CD8-positive, alpha-beta T cell (primary cell): ENCODE measurements at regions of chr1 and their contacts with region 1.

Region 1: GRCh38 chr1:165914136-165914798 is 86.9 kb downstream of the UCK2 start:
- DNase-seq: peak; percentile 42 to 83 (median 64)
- ATAC-seq: peak; percentile 96
- H3K4me3 ChIP-seq: no peak overlapping the region
- H3K4me3 Mint-ChIP-seq: no peak overlapping the region
- H3K27ac ChIP-seq: no peak overlapping the region
- H3K27ac Mint-ChIP-seq: no peak overlapping the region
- H3K4me1 ChIP-seq: no peaks in the 10 kb centered on the region
- H3K4me1 Mint-ChIP-seq: peaks cover 2% of the 10 kb centered on the region
- H3K27me3 ChIP-seq: no peaks in the 10 kb centered on the region
- H3K27me3 Mint-ChIP-seq: no peaks in the 10 kb centered on the region
- CTCF ChIP-seq: peak; percentile 96

Region 2: DNA sequence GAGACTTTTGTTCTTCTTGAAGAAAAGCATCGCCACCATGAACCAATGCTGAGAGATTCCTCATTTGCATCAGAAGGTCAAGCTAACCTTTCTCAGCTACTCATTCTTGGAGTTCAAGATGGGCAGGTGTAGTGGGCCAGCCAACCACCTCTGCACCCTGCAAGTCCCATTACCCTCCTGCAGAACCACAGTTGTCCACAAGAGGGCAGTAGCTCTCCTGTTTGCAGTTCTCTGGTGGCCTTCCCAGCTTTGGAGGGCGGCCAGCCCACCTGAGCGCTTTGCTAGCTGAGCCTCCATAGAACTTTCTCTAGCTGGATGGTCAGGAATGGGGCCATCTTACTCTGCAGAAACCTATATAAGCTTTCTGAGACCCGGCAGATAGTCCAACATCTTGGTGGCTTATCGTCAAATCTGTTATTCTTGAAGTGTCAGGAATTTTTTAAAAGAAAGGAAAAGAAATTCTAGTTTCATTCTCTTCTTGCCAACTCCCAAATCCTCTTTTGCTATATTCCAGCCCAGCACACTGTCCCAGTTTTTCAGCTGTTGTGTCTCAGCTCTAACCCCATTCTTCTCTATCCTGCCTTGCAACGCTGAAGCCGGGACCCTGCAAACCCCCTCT is 546.8 kb before region 1 on chr1:
- CTCF ChIA-PET with region 1: interaction called, 8 read pairs
- POLR2A ChIA-PET with region 1: no interaction called
- intact Hi-C with region 1: loop called in 1 of 2 experiments (anchors 5 kb)
- DNase-seq: peak; percentile 62 to 84 (median 77)
- ATAC-seq: peak; percentile 71
- H3K4me3 ChIP-seq: no peak overlapping the region
- H3K4me3 Mint-ChIP-seq: no peak overlapping the region
- H3K27ac ChIP-seq: no peak overlapping the region
- H3K27ac Mint-ChIP-seq: no peak overlapping the region
- H3K4me1 ChIP-seq: no peaks in the 10 kb centered on the region
- H3K4me1 Mint-ChIP-seq: no peaks in the 10 kb centered on the region
- H3K27me3 ChIP-seq: no peaks in the 10 kb centered on the region
- H3K27me3 Mint-ChIP-seq: peaks cover 60% of the 10 kb centered on the region
- CTCF ChIP-seq: peak; percentile 93

Region 3: DNA sequence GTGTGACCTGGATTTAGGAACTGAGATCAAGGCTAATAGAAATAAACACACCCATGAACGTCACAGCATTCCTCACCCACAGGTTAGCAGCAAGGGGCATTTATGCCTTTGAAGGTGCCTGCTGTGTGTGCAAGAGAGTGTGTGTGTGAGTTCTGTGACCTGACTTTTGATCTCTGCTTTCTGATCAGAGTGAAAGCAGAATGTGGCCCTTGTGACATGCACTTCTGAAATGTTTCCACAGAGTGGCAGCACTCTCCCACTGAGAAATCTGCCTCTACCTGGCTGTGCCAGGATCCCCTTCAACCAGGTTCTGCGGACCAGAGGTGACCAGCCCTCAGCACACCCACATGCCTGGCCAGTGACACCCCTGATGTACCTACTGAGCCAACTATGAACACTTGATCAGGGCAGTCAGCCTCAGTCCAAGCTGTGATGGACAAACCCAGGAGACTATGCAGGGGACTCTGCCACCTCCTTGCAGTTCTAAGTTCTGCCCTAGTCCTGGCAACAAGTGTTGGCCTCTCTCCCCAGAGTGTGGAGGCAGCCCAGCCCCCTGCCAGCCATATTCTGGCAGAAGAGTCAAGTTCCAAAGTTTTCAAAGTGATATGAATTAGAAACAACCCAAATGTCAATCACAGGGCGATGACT is 510.3 kb before region 1 on chr1:
- CTCF ChIA-PET with region 1: interaction called, 3 read pairs
- POLR2A ChIA-PET with region 1: no interaction called
- intact Hi-C with region 1: loop called in 1 of 2 experiments (anchors 1 kb)
- DNase-seq: peak in 3 of 9 experiments; percentile 18 to 44 (median 28)
- ATAC-seq: peak; percentile 38
- H3K4me3 ChIP-seq: no peak overlapping the region
- H3K4me3 Mint-ChIP-seq: no peak overlapping the region
- H3K27ac ChIP-seq: no peak overlapping the region
- H3K27ac Mint-ChIP-seq: no peak overlapping the region
- H3K4me1 ChIP-seq: no peaks in the 10 kb centered on the region
- H3K4me1 Mint-ChIP-seq: no peaks in the 10 kb centered on the region
- H3K27me3 ChIP-seq: no peaks in the 10 kb centered on the region
- H3K27me3 Mint-ChIP-seq: peaks cover 42% of the 10 kb centered on the region
- CTCF ChIP-seq: peak; percentile 22

Region 4: GRCh38 chr1:165717918-165718515 is 196.2 kb before region 1 on chr1:
- CTCF ChIA-PET with region 1: interaction called, 6 read pairs
- POLR2A ChIA-PET with region 1: no interaction called
- intact Hi-C with region 1: loop called (anchors 1 kb)
- DNase-seq: peak in 4 of 9 experiments; percentile 14 to 57 (median 35)
- ATAC-seq: no peak
- H3K4me3 ChIP-seq: no peak overlapping the region
- H3K4me3 Mint-ChIP-seq: no peak overlapping the region
- H3K27ac ChIP-seq: no peak overlapping the region
- H3K27ac Mint-ChIP-seq: no peak overlapping the region
- H3K4me1 ChIP-seq: no peaks in the 10 kb centered on the region
- H3K4me1 Mint-ChIP-seq: no peaks in the 10 kb centered on the region
- H3K27me3 ChIP-seq: no peaks in the 10 kb centered on the region
- H3K27me3 Mint-ChIP-seq: no peaks in the 10 kb centered on the region
- CTCF ChIP-seq: peak; percentile 24

Region 5: DNA sequence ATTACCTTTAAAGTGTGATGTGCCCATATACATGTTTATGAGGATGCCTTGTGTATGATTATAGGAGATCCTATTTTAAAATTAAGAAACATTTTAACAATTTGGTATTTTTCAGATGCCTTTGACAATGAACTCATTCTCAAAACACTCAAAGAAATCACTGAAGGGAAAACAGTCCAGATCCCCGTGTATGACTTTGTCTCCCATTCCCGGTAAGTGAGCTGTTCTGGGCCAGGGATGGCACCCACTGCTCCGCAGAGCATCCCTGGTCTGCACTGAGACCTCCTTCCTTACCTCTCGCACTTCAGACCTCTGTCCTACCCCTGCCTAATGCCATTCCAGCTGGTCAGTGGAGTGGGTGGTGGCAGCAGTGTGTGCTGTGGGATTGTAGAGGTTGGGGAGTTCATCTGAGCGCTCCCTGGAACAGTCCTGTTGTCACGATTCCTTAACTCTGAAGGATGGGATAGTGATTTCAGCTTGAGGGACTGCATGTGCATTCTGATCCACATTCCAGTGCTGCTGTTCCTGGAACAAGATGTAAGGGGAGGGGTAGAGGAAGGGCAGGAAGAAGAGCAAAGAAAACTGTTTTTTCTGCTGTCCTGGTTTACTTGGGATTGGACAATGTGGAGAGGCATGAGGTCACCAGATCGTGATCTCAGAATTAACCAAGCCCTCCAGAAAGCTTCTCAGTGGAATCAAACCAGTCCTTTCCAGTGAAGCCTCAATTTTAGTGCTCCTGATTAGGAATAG is 23.0 kb before region 1 on chr1:
- CTCF ChIA-PET with region 1: interaction called, 10 read pairs
- POLR2A ChIA-PET with region 1: no interaction called
- intact Hi-C with region 1: no loop called
- DNase-seq: no peak
- ATAC-seq: no peak
- H3K4me3 ChIP-seq: no peak overlapping the region
- H3K4me3 Mint-ChIP-seq: no peak overlapping the region
- H3K27ac ChIP-seq: no peak overlapping the region
- H3K27ac Mint-ChIP-seq: no peak overlapping the region
- H3K4me1 ChIP-seq: no peaks in the 10 kb centered on the region
- H3K4me1 Mint-ChIP-seq: no peaks in the 10 kb centered on the region
- H3K27me3 ChIP-seq: no peaks in the 10 kb centered on the region
- H3K27me3 Mint-ChIP-seq: no peaks in the 10 kb centered on the region
- CTCF ChIP-seq: no peak

Region 6: DNA sequence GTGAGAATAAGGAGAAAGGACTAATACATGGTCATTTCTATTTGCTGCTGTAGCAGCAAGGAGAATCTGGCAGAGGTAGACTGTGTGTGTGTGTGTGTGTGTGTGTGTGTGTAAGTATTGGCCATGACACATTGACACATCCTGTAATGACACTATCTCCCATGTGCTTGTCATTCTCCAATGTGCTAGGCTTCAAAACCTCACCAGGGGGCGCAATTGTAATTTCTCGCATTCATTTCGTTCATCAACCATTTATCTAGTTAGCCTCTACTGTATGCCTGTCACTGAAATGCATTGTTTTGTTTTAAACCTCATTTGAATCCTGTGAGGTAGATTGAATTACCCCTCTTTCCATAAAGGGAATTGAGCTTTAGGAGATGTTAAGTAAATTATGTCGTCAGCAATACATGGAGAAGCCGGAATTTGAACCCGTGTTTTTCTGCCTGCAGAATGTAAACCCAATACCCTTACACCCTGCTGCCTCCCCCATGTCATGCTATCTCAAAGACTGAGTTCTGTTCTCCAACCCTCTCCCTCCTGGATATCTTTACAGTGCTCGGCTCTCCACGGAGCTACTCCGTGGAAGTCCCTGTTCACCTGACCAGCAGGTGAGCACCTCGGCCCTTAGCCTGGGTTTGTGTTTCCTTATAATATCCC is 13.9 kb after region 1 on chr1:
- CTCF ChIA-PET with region 1: interaction called, 12 read pairs
- POLR2A ChIA-PET with region 1: no interaction called
- intact Hi-C with region 1: no loop called
- DNase-seq: peak in 6 of 9 experiments; percentile 13 to 65 (median 37)
- ATAC-seq: peak; percentile 58
- H3K4me3 ChIP-seq: no peak overlapping the region
- H3K4me3 Mint-ChIP-seq: no peak overlapping the region
- H3K27ac ChIP-seq: no peak overlapping the region
- H3K27ac Mint-ChIP-seq: no peak overlapping the region
- H3K4me1 ChIP-seq: no peaks in the 10 kb centered on the region
- H3K4me1 Mint-ChIP-seq: no peaks in the 10 kb centered on the region
- H3K27me3 ChIP-seq: peaks cover 3 to 4% of the 10 kb centered on the region in 2 experiments
- H3K27me3 Mint-ChIP-seq: peaks cover 28% of the 10 kb centered on the region
- CTCF ChIP-seq: peak; percentile 51

Region 7: GRCh38 chr1:165949335-165950130 is 35.3 kb after region 1 on chr1:
- CTCF ChIA-PET with region 1: no interaction called
- POLR2A ChIA-PET with region 1: no interaction called
- intact Hi-C with region 1: no loop called
- DNase-seq: no peak
- ATAC-seq: no peak
- H3K4me3 ChIP-seq: no peak overlapping the region
- H3K4me3 Mint-ChIP-seq: no peak overlapping the region
- H3K27ac ChIP-seq: no peak overlapping the region
- H3K27ac Mint-ChIP-seq: no peak overlapping the region
- H3K4me1 ChIP-seq: no peaks in the 10 kb centered on the region
- H3K4me1 Mint-ChIP-seq: no peaks in the 10 kb centered on the region
- H3K27me3 ChIP-seq: no peaks in the 10 kb centered on the region
- H3K27me3 Mint-ChIP-seq: peaks cover 14% of the 10 kb centered on the region
- CTCF ChIP-seq: no peak